Activated CD8-positive, alpha-beta T cell treated with anti-CD3 and anti-CD28 coated beads, Interleukin-2, amount 10 ng/mL, durations not matched to agents 7 days and 5 days (primary cell): ENCODE measurements at regions of chr4 and their contacts with region 1.

Region 1: GRCh38 chr4:153432968-153433753 is 33.0 kb upstream of the TMEM131L start:
- DNase-seq: peak; percentile 90
- ATAC-seq: peak; percentile 82
- H3K4me3 Mint-ChIP-seq: peak overlapping the region; percentile 78
- H3K27ac Mint-ChIP-seq: peak overlapping the region; percentile 95
- H3K4me1 Mint-ChIP-seq: peaks cover 77% of the 10 kb centered on the region
- H3K27me3 Mint-ChIP-seq: no peaks in the 10 kb centered on the region

Region 2: GRCh38 chr4:153488006-153488891 is 55.1 kb after region 1 on chr4:
- CTCF ChIA-PET with region 1: interaction called, 10 read pairs
- POLR2A ChIA-PET with region 1: interaction called, 5 read pairs
- DNase-seq: peak; percentile 79
- ATAC-seq: peak; percentile 60
- H3K4me3 Mint-ChIP-seq: peak overlapping the region; percentile 57
- H3K27ac Mint-ChIP-seq: peak overlapping the region; percentile 90
- H3K4me1 Mint-ChIP-seq: peaks cover 85% of the 10 kb centered on the region
- H3K27me3 Mint-ChIP-seq: no peaks in the 10 kb centered on the region

Region 3: DNA sequence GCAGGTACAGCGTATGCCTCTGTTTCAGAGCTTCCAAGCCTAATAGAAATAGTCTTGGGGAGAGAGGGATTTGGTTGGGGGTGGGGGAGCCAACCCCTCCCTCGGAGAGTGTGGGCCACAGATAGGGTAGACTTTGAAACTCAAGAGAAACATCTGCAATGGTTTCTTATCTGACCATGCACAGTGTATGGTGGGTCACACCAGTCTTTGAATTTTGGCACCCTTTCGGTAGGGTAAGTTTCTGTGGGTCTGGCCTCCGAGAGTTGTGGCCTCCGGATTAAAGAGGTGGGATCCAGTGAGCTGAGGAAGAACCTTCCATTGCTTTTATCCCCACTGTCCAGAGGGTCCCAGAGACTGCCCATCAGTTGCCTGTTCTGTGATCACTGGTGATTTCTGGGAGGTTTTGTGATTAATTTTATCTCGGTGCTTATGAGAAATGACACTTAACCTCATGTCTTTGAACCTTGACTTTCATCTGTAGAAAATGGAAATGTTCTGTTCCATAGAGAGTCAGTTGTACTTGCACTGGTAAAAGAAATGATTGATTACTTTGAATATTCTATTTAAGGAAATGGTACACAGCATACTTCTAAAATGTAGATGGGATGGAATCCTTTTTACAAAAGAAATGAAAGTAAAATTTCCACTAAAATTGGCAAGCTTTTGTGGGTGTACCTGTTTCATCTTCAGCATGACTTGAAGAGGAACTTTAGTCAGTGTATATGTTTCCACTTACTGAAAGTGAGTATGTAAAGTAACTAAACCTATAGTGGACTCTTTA is 95.7 kb after region 1 on chr4:
- CTCF ChIA-PET with region 1: interaction called, 19 read pairs
- POLR2A ChIA-PET with region 1: interaction called, 3 read pairs
- DNase-seq: no peak
- ATAC-seq: peak; percentile 55
- H3K4me3 Mint-ChIP-seq: peak overlapping the region; percentile 75
- H3K27ac Mint-ChIP-seq: peak overlapping the region; percentile 91
- H3K4me1 Mint-ChIP-seq: peaks cover 87% of the 10 kb centered on the region
- H3K27me3 Mint-ChIP-seq: no peaks in the 10 kb centered on the region

Region 4: DNA sequence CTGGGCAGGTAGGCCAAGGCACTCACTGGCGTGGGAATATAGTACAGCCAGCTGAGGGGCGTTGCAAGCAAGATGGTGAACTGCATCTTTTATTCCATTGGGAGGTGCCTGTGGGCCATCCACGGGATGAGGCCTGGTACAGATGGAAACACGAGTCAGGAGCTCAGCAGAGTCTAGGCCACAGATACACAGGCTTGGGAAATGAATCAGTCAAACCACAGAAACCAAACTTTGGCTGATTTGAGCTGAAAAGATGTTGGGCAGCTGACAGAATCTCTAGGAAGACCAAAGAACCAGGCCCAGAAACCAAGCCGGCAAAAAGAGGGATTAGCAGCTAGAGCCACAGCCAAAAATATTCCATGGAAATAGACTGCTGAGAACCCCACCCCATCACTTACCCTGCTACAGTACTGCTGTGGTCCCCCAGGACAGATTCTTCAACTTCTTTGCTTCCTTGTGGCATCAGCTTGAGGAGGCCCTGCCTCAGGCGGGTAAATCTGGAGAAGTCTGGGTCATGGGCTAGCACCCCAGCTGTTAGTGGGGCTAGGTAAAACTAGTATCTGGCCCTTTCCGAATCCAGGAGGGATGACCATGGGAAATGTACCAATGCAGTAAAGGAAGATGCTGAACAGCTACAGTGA is 108.4 kb after region 1 on chr4:
- CTCF ChIA-PET with region 1: interaction called, 14 read pairs
- POLR2A ChIA-PET with region 1: no interaction called
- DNase-seq: peak; percentile 38
- ATAC-seq: peak; percentile 66
- H3K4me3 Mint-ChIP-seq: no peak overlapping the region
- H3K27ac Mint-ChIP-seq: peak overlapping the region; percentile 27
- H3K4me1 Mint-ChIP-seq: peaks cover 60% of the 10 kb centered on the region
- H3K27me3 Mint-ChIP-seq: no peaks in the 10 kb centered on the region

Region 5: DNA sequence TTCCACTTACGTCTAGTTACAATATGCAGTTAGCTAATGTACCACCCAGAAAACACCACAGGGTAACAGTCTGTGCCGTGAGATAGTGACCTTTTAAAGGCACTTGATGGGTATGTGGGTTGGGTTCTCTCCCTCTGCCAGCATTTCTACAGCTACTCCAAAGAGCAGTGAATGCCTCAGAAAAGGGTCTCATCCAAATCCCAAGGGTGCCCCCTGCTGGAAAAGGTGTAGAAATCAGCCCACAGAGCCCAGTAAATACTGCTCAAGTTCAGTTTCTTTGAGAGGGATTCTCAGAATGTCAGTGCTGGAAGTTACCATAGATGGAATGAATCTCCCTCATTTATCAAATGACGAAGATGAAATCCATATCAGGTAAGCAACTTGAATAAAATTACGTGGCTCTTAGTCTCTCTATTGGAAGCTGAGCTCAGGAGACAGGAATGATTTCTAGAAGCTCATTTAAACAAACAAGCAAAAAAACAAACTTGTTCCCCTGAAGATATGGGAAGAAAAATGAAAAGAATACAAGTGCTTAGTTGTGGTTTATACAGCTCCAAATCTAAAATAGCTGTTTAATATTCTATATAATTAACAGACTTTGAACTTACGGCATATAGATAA is 317.1 kb after region 1 on chr4:
- CTCF ChIA-PET with region 1: no interaction called
- POLR2A ChIA-PET with region 1: no interaction called
- DNase-seq: peak; percentile 78
- ATAC-seq: peak; percentile 92
- H3K4me3 Mint-ChIP-seq: no peak overlapping the region
- H3K27ac Mint-ChIP-seq: no peak overlapping the region
- H3K4me1 Mint-ChIP-seq: no peaks in the 10 kb centered on the region
- H3K27me3 Mint-ChIP-seq: peaks cover 17% of the 10 kb centered on the region